Natural killer cell (primary cell): ENCODE measurements at regions of chr2 and their contacts with region 1.

Region 1: DNA sequence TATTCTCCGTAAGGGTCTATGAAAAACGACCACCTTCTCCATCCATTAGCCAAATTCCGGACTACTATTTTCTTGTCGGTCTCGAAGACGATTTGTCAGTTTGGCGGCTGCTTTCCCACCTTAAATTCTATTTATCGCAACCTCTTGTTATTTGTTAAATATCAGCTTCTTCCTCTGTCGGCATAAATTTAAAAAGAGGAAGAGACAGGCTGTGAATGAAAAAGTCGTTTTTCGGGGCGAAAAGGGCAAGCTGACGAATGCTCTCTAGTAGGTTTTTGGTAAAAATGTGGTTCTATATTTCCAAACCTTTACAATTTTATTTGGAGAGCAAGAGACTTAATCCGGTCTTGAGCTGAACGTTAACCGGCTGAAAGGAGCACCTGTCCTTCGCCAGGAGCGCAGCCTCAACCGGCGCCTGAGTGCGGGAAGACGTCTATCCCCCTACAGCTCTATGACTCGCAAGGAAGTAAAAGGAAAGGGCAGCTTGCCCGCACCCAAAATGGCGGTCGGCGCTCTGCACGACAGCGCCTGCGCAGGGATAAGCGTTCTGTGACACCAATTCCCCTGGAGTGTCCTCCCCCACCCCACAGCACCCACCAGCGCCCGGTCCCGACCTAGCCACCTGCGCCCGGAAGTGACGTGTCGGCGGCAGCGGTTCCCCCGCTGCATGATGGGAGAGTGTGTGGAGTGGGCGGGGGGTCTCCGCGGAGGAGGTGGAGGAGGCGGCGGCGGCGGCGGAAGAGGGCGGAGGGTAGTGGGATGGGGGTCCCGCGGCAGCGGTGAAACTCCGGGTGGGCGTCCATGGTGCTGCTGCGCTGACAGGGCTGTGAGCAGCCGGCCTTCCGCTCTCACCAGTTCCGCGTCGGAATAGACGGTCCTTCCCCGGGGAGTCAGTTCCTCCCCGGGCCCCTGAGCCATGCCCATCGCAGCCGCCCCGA is at the start of gene AFTPH:
- DNase-seq: peak; percentile 98 to 100
- ATAC-seq: peak; percentile 90 to 99 (median 95)
- H3K4me3 ChIP-seq: peak within 1 kb of the TSS; percentile 74
- H3K4me3 Mint-ChIP-seq: peak within 1 kb of the TSS; percentile 98
- H3K27ac ChIP-seq: peak within 1 kb of the TSS; percentile 86
- H3K27ac Mint-ChIP-seq: peak within 1 kb of the TSS; percentile 96 to 98
- H3K4me1 ChIP-seq: peaks cover 11% of the 10 kb centered on the region
- H3K4me1 Mint-ChIP-seq: peaks cover 28 to 42% of the 10 kb centered on the region in 2 donors
- H3K27me3 ChIP-seq: no peaks in the 10 kb centered on the region
- H3K27me3 Mint-ChIP-seq: no peaks in the 10 kb centered on the region
- CTCF ChIP-seq: no peak
- total RNA-seq, gene AFTPH: 28.9 to 39.6 (median 39.5) TPM

Region 2: GRCh38 chr2:63741874-63742583 is 781.9 kb before region 1 on chr2:
- intact Hi-C with region 1: no loop called
- DNase-seq: no peak
- ATAC-seq: no peak
- H3K4me3 ChIP-seq: no peak overlapping the region
- H3K4me3 Mint-ChIP-seq: no peak overlapping the region
- H3K27ac ChIP-seq: no peak overlapping the region
- H3K27ac Mint-ChIP-seq: no peak overlapping the region
- H3K4me1 ChIP-seq: no peaks in the 10 kb centered on the region
- H3K4me1 Mint-ChIP-seq: no peaks in the 10 kb centered on the region
- H3K27me3 ChIP-seq: no peaks in the 10 kb centered on the region
- H3K27me3 Mint-ChIP-seq: peaks cover 16 to 27% of the 10 kb centered on the region in 2 donors
- CTCF ChIP-seq: no peak

Region 3: GRCh38 chr2:64439194-64439593 is 84.7 kb before region 1 on chr2:
- intact Hi-C with region 1: no loop called
- DNase-seq: no peak
- ATAC-seq: no peak
- H3K4me3 ChIP-seq: no peak overlapping the region
- H3K4me3 Mint-ChIP-seq: no peak overlapping the region
- H3K27ac ChIP-seq: no peak overlapping the region
- H3K27ac Mint-ChIP-seq: no peak overlapping the region
- H3K4me1 ChIP-seq: no peaks in the 10 kb centered on the region
- H3K4me1 Mint-ChIP-seq: no peaks in the 10 kb centered on the region
- H3K27me3 ChIP-seq: peaks cover 2% of the 10 kb centered on the region
- H3K27me3 Mint-ChIP-seq: peaks cover 29% of the 10 kb centered on the region in 2 donors
- CTCF ChIP-seq: no peak

Region 4: DNA sequence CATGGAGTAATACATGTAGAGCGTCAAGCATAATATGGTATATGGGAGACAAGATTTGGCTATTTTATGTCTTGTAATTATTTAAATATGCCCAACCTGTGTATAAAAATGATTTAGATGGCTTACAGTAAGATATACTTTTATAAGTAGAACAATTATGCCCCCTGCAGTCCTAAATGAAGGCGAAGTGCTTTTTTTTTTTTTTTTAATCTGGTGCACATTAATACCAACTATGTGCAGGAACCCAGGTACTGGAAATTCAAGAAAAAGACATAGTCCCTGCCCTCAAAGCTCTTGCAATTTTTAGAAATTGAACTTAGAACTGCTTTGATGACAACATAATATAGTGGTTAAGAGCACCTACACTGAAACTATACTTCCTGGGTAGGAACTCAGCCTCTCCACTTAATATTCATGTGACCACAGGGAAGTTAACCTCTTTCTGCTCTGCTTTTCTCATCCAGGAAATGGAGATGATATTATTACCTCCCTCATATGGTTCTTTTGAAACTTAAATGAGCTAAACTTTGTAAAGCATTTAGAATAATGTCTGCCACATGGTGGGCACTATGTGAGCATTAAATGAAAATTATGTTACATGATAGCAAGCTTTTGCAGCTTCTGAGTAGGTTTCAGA is 38.3 kb after region 1 on chr2:
- intact Hi-C with region 1: loop called (anchors 1 kb)
- DNase-seq: peak in 1 of 2 donors; percentile 66
- ATAC-seq: peak in 1 of 3 donors; percentile 63
- H3K4me3 ChIP-seq: no peak overlapping the region
- H3K4me3 Mint-ChIP-seq: no peak overlapping the region
- H3K27ac ChIP-seq: no peak overlapping the region
- H3K27ac Mint-ChIP-seq: peak overlapping the region in 1 of 2 donors; percentile 18
- H3K4me1 ChIP-seq: no peaks in the 10 kb centered on the region
- H3K4me1 Mint-ChIP-seq: peaks cover 27 to 33% of the 10 kb centered on the region in 2 donors
- H3K27me3 ChIP-seq: no peaks in the 10 kb centered on the region
- H3K27me3 Mint-ChIP-seq: no peaks in the 10 kb centered on the region
- CTCF ChIP-seq: peak; percentile 36

Region 5: DNA sequence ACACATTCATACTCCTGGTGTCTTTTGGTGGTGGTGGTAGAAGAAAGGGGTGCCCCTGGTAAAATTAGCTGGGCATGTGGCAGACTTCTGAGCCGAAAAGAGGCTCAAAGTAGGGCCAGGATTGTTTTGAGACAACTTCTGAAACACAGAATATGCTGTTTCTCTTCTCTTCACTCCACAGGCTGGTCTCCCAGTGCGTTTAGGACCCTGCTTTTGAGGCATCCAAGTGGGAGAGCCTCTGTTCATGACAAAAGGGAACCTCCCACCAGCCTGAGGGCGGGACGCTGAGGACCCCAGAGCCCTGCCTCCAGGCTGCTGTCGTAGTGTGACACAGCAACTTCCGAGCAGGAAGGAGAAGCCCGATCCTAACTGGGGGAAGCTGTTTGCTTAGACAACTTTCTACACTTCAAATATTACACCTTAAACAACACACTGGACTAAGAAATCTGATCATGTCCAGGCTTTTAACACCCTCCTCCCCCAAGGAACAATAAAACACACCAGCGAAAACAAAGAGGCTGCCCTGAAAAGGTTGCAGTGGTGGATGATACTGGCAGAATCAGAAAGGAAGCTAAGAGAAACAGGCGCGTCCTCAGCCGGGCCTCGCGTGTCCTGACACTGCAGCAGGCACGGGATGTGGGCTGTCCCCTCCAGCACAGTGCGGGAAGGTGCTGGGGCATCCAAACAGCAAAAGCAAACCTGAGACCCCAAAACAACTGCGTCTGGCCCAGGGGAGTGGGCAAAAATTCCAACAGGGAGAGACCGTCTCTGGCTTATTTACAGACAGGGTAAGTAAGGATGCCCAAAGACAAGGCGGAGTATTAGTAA is 120.5 kb after region 1 on chr2:
- intact Hi-C with region 1: loop called (anchors 1 kb)
- DNase-seq: peak; percentile 64 to 70
- ATAC-seq: peak; percentile 66 to 83 (median 68)
- H3K4me3 ChIP-seq: peak overlapping the region; percentile 23
- H3K4me3 Mint-ChIP-seq: peak overlapping the region; percentile 96
- H3K27ac ChIP-seq: peak overlapping the region; percentile 93
- H3K27ac Mint-ChIP-seq: peak overlapping the region; percentile 98 to 99
- H3K4me1 ChIP-seq: peaks cover 53% of the 10 kb centered on the region
- H3K4me1 Mint-ChIP-seq: peaks cover 59 to 67% of the 10 kb centered on the region in 2 donors
- H3K27me3 ChIP-seq: no peaks in the 10 kb centered on the region
- H3K27me3 Mint-ChIP-seq: no peaks in the 10 kb centered on the region
- CTCF ChIP-seq: no peak

Region 6: GRCh38 chr2:64750817-64751285 is 226.9 kb after region 1 on chr2:
- intact Hi-C with region 1: loop called (anchors 2 kb)
- DNase-seq: peak; percentile 97 to 99
- ATAC-seq: peak; percentile 77 to 92 (median 81)
- H3K4me3 ChIP-seq: peak overlapping the region; percentile 47
- H3K4me3 Mint-ChIP-seq: peak overlapping the region; percentile 96
- H3K27ac ChIP-seq: peak overlapping the region; percentile 95
- H3K27ac Mint-ChIP-seq: peak overlapping the region; percentile 77 to 96
- H3K4me1 ChIP-seq: peaks cover 5% of the 10 kb centered on the region
- H3K4me1 Mint-ChIP-seq: peaks cover 12 to 16% of the 10 kb centered on the region in 2 donors
- H3K27me3 ChIP-seq: no peaks in the 10 kb centered on the region
- H3K27me3 Mint-ChIP-seq: no peaks in the 10 kb centered on the region
- CTCF ChIP-seq: no peak

Region 7: DNA sequence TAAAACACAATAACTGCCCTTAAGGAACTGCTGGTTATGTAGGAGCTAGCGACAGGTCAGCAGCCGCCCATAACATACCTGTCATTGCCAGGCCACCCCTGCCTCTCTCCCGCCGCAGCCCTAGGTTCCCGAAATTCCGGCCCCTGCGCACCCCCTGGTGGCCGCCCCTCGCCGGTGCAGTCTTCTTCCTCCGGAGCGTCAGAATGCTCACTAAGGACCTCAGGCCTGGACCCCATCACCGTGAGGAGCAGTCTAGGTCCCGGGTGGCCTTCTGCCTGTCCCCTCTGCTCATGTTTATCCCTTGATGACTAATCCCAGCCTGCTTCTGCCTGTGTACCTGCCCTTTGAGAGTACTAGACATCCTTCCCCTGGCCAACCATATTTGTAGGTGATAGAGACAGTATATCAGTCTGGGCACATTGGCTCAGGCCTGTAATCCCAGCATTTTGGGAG is 349.6 kb after region 1 on chr2:
- intact Hi-C with region 1: loop called (anchors 2 kb)
- DNase-seq: peak; percentile 80 to 83
- ATAC-seq: peak; percentile 91 to 98 (median 98)
- H3K4me3 ChIP-seq: no peak overlapping the region
- H3K4me3 Mint-ChIP-seq: no peak overlapping the region
- H3K27ac ChIP-seq: no peak overlapping the region
- H3K27ac Mint-ChIP-seq: peak overlapping the region in 1 of 2 donors; percentile 17
- H3K4me1 ChIP-seq: peaks cover 8% of the 10 kb centered on the region
- H3K4me1 Mint-ChIP-seq: peaks cover 0 to 8% of the 10 kb centered on the region in 2 donors
- H3K27me3 ChIP-seq: no peaks in the 10 kb centered on the region
- H3K27me3 Mint-ChIP-seq: peaks cover 2 to 5% of the 10 kb centered on the region in 2 donors
- CTCF ChIP-seq: peak; percentile 93

Region 8: GRCh38 chr2:65129826-65130663 is 606.1 kb after region 1 on chr2 and contains the start of gene RAB1A:
- intact Hi-C with region 1: loop called (anchors 5 kb)
- DNase-seq: peak; percentile 95 to 100
- ATAC-seq: peak; percentile 87 to 96 (median 87)
- H3K4me3 ChIP-seq: peak within 1 kb of the TSS; percentile 84
- H3K4me3 Mint-ChIP-seq: peak within 1 kb of the TSS; percentile 100
- H3K27ac ChIP-seq: peak within 1 kb of the TSS; percentile 94
- H3K27ac Mint-ChIP-seq: peak within 1 kb of the TSS; percentile 99
- H3K4me1 ChIP-seq: peaks cover 30% of the 10 kb centered on the region
- H3K4me1 Mint-ChIP-seq: peaks cover 38 to 47% of the 10 kb centered on the region in 2 donors
- H3K27me3 ChIP-seq: no peaks in the 10 kb centered on the region
- H3K27me3 Mint-ChIP-seq: no peaks in the 10 kb centered on the region
- CTCF ChIP-seq: peak; percentile 9
- total RNA-seq, gene RAB1A: 83.5 to 101 (median 93.6) TPM